OCI-LY7 (cell line): ENCODE measurements at regions of chr1 and their contacts with region 1.

Region 1: DNA sequence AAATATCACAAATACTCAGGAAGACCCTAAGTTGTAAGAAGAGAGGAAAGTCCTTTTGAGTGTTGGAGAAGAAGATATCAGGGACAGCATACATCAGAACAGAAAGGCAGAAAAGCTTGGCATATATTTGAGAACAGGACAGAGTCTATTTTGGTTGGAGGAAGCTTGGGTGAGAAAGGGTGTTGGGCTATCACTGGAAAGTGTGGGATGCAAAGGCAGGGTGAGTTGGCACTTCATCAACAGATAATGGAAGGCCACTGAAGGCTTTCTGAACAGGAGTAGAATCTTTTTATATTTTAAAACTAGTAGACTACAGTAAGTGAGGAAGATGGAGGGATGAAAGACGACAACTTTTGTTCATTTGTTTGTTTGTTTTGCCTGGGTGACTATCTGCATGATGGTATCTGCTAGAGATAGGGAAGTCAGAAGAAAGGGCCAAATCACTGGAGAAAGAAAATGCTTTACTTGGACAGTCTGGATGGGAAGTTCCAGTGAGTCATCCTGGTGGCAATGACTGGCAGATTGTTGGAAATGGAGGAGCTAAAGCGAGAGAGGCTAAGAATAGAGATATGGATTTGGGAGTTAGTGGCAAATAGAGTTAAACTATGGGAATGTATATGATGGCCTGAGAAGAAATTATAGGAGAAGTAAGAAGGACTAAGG is 33.7 kb upstream of the KCNA2 start:
- DNase-seq: no peak
- H3K4me3 ChIP-seq: no peak overlapping the region
- H3K27ac ChIP-seq: no peak overlapping the region
- H3K4me1 ChIP-seq: peaks cover 72% of the 10 kb centered on the region
- CTCF ChIP-seq: no peak

Region 2: GRCh38 chr1:110668549-110668948 is 28.7 kb after region 1 on chr1:
- CTCF ChIA-PET with region 1: interaction called, 10 read pairs
- POLR2A ChIA-PET with region 1: interaction called, 56 read pairs
- intact Hi-C with region 1: loop called (anchors 1 kb)
- DNase-seq: no peak
- H3K4me3 ChIP-seq: peak overlapping the region; percentile 84
- H3K27ac ChIP-seq: no peak overlapping the region
- H3K4me1 ChIP-seq: peaks cover 37% of the 10 kb centered on the region
- CTCF ChIP-seq: no peak

Region 3: DNA sequence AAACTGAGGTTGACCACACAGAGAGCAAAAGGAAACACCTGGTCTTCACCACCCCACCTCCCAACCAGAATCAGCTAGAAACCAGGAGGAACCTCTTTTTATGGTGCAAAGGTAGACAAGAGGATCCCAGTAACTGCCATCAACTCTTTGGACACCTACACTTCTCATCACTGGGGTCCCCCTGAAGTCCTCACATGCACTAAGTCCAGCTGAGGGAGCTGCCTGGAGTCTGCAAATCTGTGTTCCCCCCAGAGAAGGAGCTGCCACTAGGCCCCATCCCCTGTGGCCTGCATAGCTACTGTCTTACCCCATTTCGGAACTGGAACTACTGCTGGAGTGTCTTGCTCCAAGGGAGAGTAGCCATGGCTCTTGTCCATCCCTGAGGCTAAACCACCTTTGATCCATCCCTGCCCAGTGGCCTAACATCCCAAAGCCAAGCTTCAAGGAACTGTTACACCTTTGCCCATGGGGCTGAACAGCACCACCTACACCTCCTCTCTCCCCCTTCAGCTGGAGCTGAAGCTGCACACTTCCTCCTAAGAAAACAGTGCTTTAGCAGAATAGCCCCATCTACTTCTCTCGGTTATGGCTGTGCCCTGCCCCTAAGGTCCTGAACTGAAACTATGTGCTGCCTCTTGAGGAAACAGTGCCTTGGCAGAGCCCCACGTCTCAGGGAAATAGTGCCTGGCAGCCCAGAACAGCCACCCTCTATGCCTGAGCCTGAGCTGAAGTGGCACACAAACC is 147.6 kb after region 1 on chr1:
- CTCF ChIA-PET with region 1: interaction called, 7 read pairs
- POLR2A ChIA-PET with region 1: interaction called, 10 read pairs
- intact Hi-C with region 1: no loop called
- DNase-seq: peak; percentile 82
- H3K4me3 ChIP-seq: peak overlapping the region; percentile 47
- H3K27ac ChIP-seq: peak overlapping the region; percentile 80
- H3K4me1 ChIP-seq: peaks cover 30% of the 10 kb centered on the region
- CTCF ChIP-seq: peak; percentile 37; the same call in 1 of the 2 replicates

Region 4: GRCh38 chr1:110903853-110904484 is 264.1 kb after region 1 on chr1:
- CTCF ChIA-PET with region 1: no interaction called
- POLR2A ChIA-PET with region 1: no interaction called
- intact Hi-C with region 1: no loop called
- DNase-seq: no peak
- H3K4me3 ChIP-seq: no peak overlapping the region
- H3K27ac ChIP-seq: no peak overlapping the region
- H3K4me1 ChIP-seq: peaks cover 4% of the 10 kb centered on the region
- CTCF ChIP-seq: no peak

Region 5: DNA sequence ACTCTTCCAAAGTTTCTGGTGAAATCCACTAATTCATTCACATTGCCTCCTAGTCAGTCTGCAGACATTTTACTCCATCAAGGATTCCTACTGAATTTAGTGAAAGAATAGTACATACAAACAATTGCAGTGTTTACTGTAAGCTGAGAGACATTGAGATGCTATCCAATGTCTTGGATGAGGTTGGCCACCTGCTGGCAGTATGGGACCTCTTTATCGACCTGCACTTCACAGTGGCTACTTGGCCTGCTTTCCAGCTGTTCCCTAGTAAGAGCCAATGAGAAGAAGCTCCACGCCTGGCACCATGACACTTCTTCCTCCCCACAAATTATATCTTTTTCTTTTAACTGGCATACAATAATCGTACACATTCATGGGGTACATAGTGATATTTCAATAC is 375.4 kb after region 1 on chr1:
- CTCF ChIA-PET with region 1: no interaction called
- POLR2A ChIA-PET with region 1: no interaction called
- intact Hi-C with region 1: no loop called
- DNase-seq: peak; percentile 31
- H3K4me3 ChIP-seq: no peak overlapping the region
- H3K27ac ChIP-seq: no peak overlapping the region
- H3K4me1 ChIP-seq: no peaks in the 10 kb centered on the region
- CTCF ChIP-seq: peak; percentile 61